PC-9 (cell line): ENCODE measurements at regions of chr5 and their contacts with region 1.

Region 1: GRCh38 chr5:113330533-113331208 is 104.1 kb downstream of the TSSK1B start:
- DNase-seq: peak in 1 of 2 experiments; percentile 49
- H3K4me3 ChIP-seq: no peak overlapping the region
- H3K27ac ChIP-seq: no peak overlapping the region
- H3K4me1 ChIP-seq: no peaks in the 10 kb centered on the region
- H3K27me3 ChIP-seq: no peaks in the 10 kb centered on the region
- CTCF ChIP-seq: peak; percentile 64

Region 2: DNA sequence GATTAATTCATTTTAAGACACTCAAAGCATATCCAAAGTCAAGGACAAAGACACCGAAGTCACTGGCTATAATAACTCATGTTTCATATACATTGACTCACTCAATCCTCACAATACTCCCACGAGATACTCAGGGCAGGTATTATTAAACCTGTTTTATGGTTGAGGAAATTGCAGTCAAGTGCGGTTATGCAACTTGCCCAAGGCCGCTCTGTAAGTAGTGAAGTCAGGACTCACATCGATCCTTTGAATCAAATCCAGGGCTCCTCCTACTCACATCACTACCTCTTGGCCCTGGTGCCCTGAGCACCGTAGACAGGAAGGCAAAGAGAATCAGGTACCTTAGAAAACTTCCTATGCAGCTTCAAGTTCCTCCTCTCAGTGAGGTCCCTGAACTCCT is 680.8 kb before region 1 on chr5:
- CTCF ChIA-PET with region 1: no interaction called
- POLR2A ChIA-PET with region 1: no interaction called
- intact Hi-C with region 1: no loop called
- DNase-seq: peak in 1 of 2 experiments; percentile 80
- H3K4me3 ChIP-seq: no peak overlapping the region
- H3K27ac ChIP-seq: no peak overlapping the region
- H3K4me1 ChIP-seq: no peaks in the 10 kb centered on the region
- H3K27me3 ChIP-seq: no peaks in the 10 kb centered on the region
- CTCF ChIP-seq: no peak

Region 3: DNA sequence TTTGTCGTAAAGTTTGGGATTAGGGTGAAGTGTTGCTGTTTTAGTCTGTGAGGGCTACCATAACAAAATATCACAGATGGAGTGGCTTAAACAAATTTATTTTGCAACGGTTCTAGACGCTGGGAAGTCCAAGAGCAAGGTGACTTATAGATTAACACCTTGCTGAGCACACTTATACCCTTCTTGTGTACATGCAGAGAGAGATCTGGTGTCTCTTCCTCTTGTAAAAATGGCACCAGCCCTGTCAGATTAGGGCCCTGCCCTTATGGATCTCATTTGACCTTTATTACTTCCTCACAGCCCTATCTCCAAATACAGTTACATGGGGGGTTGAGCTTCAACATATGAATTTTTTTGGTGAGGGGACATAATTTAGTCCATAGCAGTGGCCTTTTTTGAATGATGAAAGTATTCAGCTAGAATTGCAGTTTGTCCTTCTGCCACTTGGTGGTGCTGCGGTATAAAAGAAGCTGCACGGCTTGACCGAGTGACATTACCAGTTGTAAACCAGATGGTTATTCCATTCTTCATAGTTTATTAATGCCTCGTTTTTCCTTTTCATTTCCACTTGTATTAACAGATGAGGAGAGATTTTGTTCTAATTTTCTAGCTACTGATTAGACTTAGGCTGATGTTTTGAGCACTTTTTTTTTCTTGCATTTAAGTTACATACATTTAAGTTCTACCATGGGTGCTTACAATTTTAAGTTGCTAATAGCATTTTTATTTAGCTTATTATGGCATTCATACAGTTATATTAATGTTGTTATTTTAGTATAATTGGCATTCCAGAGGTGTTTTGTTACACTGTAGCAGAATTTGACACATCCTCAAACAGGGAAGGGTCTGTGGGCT is 334.7 kb before region 1 on chr5:
- CTCF ChIA-PET with region 1: no interaction called
- POLR2A ChIA-PET with region 1: no interaction called
- intact Hi-C with region 1: loop called (anchors 1 kb)
- DNase-seq: peak; percentile 39 to 60
- H3K4me3 ChIP-seq: no peak overlapping the region
- H3K27ac ChIP-seq: no peak overlapping the region
- H3K4me1 ChIP-seq: no peaks in the 10 kb centered on the region
- H3K27me3 ChIP-seq: no peaks in the 10 kb centered on the region
- CTCF ChIP-seq: peak; percentile 96

Region 4: DNA sequence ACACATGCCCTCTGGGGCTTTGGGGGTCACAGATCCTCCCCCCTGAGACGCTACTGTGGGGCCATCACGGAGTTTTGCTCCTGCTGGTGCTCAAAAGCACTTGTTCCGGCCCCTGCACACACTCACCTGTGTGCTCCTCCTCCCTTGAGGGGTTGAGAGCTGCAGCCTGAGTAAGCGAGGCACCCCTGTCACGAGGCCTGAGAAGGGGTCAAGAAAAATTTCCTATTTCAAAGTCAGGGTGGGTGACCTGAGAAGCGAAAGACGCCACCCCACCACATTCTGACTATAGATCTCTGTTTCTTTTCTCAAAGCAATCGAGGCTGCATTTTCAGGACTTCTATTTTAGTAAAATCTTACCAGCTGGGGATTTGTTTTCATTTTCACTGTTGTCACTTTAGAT is 215.6 kb before region 1 on chr5:
- CTCF ChIA-PET with region 1: no interaction called
- POLR2A ChIA-PET with region 1: interaction called, 22 read pairs
- intact Hi-C with region 1: no loop called
- DNase-seq: no peak
- H3K4me3 ChIP-seq: no peak overlapping the region
- H3K27ac ChIP-seq: no peak overlapping the region
- H3K4me1 ChIP-seq: no peaks in the 10 kb centered on the region
- H3K27me3 ChIP-seq: no peaks in the 10 kb centered on the region
- CTCF ChIP-seq: no peak